Activated CD8-positive, alpha-beta T cell treated with anti-CD3 and anti-CD28 coated beads for 36 hours (primary cell): ENCODE measurements at regions of chr10 and their contacts with region 1.

Region 1: GRCh38 chr10:43396928-43397624 is 11.9 kb downstream of the HNRNPF start:
- DNase-seq: peak; percentile 91
- ATAC-seq: peak; percentile 74
- H3K4me3 Mint-ChIP-seq: peak overlapping the region; percentile 99
- H3K27ac Mint-ChIP-seq: peak overlapping the region; percentile 93
- H3K4me1 Mint-ChIP-seq: peaks cover 66% of the 10 kb centered on the region
- H3K27me3 Mint-ChIP-seq: no peaks in the 10 kb centered on the region
- CTCF ChIP-seq: no peak

Region 2: DNA sequence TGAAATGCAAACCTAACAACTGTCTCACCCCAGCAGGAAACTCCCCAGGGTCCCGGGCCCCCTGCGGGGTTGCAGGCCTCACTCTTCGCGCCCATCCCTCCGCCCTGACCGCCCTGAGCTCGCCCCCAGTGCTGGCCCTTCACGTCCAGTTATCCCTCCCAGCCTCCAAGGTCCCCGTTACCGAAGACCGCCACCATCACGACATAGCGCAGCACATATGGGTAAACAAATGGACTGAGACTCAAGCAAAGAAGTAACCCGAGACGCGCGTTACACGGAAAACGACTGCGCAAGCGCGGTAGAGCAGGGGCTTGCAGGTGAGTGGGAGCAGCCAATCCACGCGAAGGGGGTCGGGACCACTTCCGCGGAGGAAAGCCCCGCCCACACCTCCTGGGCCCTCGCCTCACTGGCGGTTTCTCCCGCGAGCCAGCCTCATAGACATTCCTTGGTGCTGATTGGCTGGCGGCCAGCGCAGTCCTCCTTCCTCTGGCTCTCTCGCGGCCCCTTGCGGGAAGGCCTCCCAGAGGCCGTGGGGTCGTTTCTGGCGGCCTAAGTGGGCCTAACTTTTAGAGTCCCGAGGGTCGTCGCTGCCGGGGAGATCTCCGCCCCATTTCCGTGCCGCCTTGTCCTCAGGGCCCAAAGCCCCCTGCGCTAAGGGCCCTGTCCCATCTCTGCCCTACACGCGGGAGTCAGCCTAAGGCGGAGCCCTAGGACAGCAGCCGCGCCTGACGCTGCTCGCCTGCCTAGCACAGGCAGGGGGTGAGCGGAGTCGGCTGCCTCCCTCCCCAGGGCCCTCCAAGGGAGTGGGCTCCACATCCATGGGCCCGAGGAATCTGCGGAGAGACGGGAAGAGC is 34.9 kb before region 1 on chr10:
- CTCF ChIA-PET with region 1: no interaction called
- POLR2A ChIA-PET with region 1: interaction called, 4 read pairs
- intact Hi-C with region 1: loop called (anchors 5 kb)
- DNase-seq: peak; percentile 99
- ATAC-seq: peak; percentile 95
- H3K4me3 Mint-ChIP-seq: peak overlapping the region; percentile 90
- H3K27ac Mint-ChIP-seq: peak overlapping the region; percentile 98
- H3K4me1 Mint-ChIP-seq: peaks cover 22% of the 10 kb centered on the region
- H3K27me3 Mint-ChIP-seq: no peaks in the 10 kb centered on the region
- CTCF ChIP-seq: peak; percentile 43

Region 3: DNA sequence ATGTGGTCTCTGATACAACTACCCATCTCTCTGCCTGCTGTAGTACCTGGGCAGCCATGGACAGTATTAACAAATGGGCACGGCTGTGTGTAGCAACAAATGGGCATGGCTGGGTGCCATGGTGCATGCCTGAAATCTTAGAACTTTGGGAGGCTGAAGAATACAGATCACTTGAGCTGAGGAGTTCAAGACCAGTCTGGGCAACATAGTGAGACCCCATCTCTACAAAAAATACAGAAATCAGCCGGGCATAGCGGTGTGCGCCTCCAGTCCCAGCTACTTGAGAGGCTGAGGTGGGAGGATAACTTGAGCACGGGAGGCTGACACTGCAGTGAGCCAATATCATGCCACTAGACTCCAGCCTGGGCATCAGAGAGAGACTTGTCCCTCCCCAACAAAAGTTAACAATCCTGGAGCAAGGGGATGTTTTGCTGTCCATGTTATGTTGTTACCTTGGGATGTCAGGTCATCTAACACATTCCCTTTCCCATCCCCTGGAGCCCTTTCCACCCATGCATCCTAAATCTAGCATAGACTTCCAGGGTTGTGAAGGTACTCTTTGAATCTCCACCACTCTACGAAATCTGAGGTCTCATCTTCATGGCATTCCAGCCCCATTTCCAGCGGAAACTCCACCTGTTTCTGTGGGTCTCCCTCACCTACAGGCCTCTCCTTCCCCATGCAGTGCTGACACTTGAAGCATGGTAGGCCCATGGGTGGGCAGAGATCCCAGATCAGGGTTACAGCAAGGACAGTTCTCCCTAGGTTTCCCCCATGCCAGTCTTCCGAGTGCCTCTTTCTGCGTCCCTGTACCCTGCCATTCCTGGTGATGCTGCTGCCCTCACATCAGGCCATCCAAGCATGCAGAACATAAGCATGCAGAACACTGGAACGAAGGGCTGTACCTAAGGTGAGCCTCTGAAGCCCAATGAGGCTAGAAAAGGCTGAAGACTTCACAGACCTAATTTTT is 12.5 kb before region 1 on chr10:
- CTCF ChIA-PET with region 1: interaction called, 4 read pairs
- POLR2A ChIA-PET with region 1: interaction called, 27 read pairs
- intact Hi-C with region 1: no loop called
- DNase-seq: no peak
- ATAC-seq: no peak
- H3K4me3 Mint-ChIP-seq: no peak overlapping the region
- H3K27ac Mint-ChIP-seq: peak overlapping the region; percentile 61
- H3K4me1 Mint-ChIP-seq: peaks cover 27% of the 10 kb centered on the region
- H3K27me3 Mint-ChIP-seq: no peaks in the 10 kb centered on the region
- CTCF ChIP-seq: no peak

Region 4: DNA sequence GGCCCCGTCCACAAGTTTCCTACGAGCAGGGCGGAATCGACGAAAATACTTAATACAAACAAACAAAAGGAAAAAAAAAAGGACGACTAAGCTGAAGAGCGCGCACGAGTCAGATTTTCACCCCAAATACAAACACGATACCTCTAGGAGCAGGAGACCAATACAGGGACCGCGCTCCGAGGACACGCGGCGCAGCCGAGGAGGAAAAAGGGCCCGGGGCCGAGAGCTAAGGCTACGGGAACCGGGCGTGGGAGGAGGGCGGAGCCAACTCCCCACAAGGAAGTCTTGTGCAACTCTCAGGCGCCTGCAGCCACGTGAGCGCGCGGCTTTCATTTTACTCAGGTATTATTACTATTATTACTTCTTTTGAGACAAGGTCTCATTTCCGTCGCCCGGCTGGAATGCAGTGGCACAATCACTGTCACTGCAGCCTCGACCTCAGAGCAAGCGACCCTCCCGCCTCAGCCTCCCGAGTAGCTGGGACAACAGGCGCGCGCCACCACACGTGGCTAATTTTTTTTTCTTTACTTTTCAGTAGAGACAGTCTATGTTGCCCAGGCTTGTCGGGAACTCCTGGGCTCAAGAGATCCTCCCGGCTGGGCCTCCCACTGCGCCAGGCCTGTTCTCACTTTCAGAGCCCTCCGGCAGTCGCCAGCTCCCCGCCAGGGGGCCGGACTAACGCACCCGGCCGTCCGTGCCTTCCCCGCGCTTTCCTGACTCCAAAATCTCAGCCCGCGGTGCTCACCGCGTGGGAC is 10.7 kb after region 1 on chr10:
- CTCF ChIA-PET with region 1: interaction called, 12 read pairs
- POLR2A ChIA-PET with region 1: interaction called, 332 read pairs
- intact Hi-C with region 1: loop called (anchors 1 kb)
- DNase-seq: peak; percentile 97
- ATAC-seq: peak; percentile 35
- H3K4me3 Mint-ChIP-seq: peak overlapping the region; percentile 99
- H3K27ac Mint-ChIP-seq: peak overlapping the region; percentile 100
- H3K4me1 Mint-ChIP-seq: peaks cover 24% of the 10 kb centered on the region
- H3K27me3 Mint-ChIP-seq: no peaks in the 10 kb centered on the region
- CTCF ChIP-seq: peak; percentile 56

Region 5: GRCh38 chr10:43420369-43421200 is 23.5 kb after region 1 on chr10:
- CTCF ChIA-PET with region 1: no interaction called
- POLR2A ChIA-PET with region 1: interaction called, 60 read pairs
- intact Hi-C with region 1: no loop called
- DNase-seq: peak; percentile 90
- ATAC-seq: peak; percentile 80
- H3K4me3 Mint-ChIP-seq: peak overlapping the region; percentile 77
- H3K27ac Mint-ChIP-seq: peak overlapping the region; percentile 96
- H3K4me1 Mint-ChIP-seq: peaks cover 31% of the 10 kb centered on the region
- H3K27me3 Mint-ChIP-seq: no peaks in the 10 kb centered on the region
- CTCF ChIP-seq: no peak

Region 6: GRCh38 chr10:43427166-43427825 is 30.2 kb after region 1 on chr10:
- CTCF ChIA-PET with region 1: no interaction called
- POLR2A ChIA-PET with region 1: interaction called, 10 read pairs
- intact Hi-C with region 1: no loop called
- DNase-seq: peak; percentile 66
- ATAC-seq: peak; percentile 74
- H3K4me3 Mint-ChIP-seq: peak overlapping the region; percentile 46
- H3K27ac Mint-ChIP-seq: peak overlapping the region; percentile 71
- H3K4me1 Mint-ChIP-seq: peaks cover 13% of the 10 kb centered on the region
- H3K27me3 Mint-ChIP-seq: no peaks in the 10 kb centered on the region
- CTCF ChIP-seq: no peak